ENCODE measurements at regions of chr12 and their contacts with region 1.

Region 1: DNA sequence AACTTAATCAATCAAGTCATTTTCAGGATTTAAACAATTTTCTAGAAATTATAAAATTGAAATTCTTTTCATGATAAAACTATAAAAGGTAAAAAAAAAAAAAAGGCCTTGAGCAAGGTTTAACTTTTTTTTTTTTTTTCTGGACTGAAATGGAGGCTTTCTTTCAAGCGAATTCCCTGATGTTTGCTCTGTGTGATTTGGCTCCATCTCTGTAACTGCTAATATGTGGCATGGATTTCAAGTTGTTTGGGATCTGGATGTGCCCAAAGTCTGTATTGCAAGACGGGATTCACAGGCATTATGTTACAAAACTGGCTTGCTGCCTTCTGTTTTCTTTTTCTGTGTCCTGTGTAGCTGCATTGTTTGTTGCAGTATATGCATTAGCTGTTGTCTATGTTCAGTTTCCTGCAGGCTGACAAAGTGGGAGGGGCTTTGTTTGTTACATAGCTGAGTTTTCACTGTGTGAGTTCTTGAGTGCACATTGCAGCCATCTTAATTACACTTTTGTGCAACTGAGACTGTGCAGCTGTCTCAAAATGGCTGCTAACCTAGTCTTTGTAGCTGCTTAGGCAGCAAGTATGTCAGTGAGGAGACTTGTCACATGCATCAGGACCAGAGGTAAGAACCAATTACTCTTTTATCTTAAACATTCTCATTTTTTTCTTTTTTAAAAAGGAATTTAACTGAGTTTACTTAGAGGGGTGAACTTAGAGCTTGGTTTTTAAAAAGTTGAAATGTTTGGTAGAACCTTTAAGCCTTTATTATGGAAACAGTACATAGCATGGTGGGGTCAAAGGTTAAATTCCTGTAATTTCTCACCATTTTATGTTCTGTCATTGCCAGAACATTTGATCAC is 19.5 kb downstream of the ATF7IP start:
- DNase-seq: peak in 8 of 9 donors; percentile 47 to 84 (median 77)
- ATAC-seq: peak; percentile 96
- H3K4me3 ChIP-seq: peak overlapping the region; percentile 18
- H3K4me3 Mint-ChIP-seq: peak overlapping the region; percentile 65 to 85 (median 76)
- H3K27ac ChIP-seq: peak overlapping the region; percentile 71
- H3K27ac Mint-ChIP-seq: peak overlapping the region; percentile 86 to 95 (median 93)
- H3K4me1 ChIP-seq: peaks cover 32 to 49% of the 10 kb centered on the region in 2 donors
- H3K4me1 Mint-ChIP-seq: peaks cover 31 to 79% (median 68%) of the 10 kb centered on the region in 7 donors
- H3K27me3 ChIP-seq: no peaks in the 10 kb centered on the region
- H3K27me3 Mint-ChIP-seq: no peaks in the 10 kb centered on the region

Region 2: GRCh38 chr12:12724661-12725545 is 1660.1 kb before region 1 on chr12:
- CTCF ChIA-PET with region 1: no interaction called
- POLR2A ChIA-PET with region 1: no interaction called
- intact Hi-C with region 1: loop called in 1 of 2 experiments (anchors 5 kb)
- DNase-seq: peak; percentile 78 to 97 (median 92)
- ATAC-seq: peak; percentile 77
- H3K4me3 ChIP-seq: peak overlapping the region; percentile 53
- H3K4me3 Mint-ChIP-seq: peak overlapping the region; percentile 87 to 98 (median 94)
- H3K27ac ChIP-seq: peak overlapping the region; percentile 99
- H3K27ac Mint-ChIP-seq: peak overlapping the region; percentile 96 to 99 (median 97)
- H3K4me1 ChIP-seq: peaks cover 28% of the 10 kb centered on the region in 2 donors
- H3K4me1 Mint-ChIP-seq: peaks cover 23 to 64% (median 56%) of the 10 kb centered on the region in 7 donors
- H3K27me3 ChIP-seq: no peaks in the 10 kb centered on the region
- H3K27me3 Mint-ChIP-seq: peaks cover 0 to 7% (median 0%) of the 10 kb centered on the region in 5 donors

Region 3: DNA sequence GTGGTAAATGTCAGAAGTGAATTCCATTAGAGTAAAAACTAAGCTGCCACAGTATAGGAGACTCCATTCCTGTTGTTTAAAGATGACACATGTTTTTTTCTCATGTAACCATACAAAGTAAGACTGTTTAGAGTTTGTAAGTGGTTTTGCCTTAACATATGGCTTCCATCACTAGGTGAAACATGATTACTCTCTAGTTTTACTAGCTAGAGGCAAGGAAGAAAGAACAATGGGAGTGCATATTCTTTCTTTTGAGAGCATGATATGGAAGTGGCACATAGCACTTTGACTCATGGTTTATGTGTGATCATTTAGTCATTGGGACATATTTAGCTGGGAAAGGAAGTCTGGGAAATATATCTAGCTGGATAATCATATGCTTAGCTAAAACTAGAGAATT is 11.8 kb before region 1 on chr12:
- CTCF ChIA-PET with region 1: interaction called, 12 read pairs
- POLR2A ChIA-PET with region 1: interaction called, 84 read pairs
- intact Hi-C with region 1: loop called (anchors 1 kb)
- DNase-seq: no peak
- ATAC-seq: peak; percentile 27
- H3K4me3 ChIP-seq: no peak overlapping the region
- H3K4me3 Mint-ChIP-seq: peak overlapping the region in 9 of 10 donors; percentile 10 to 81 (median 58)
- H3K27ac ChIP-seq: peak overlapping the region; percentile 31
- H3K27ac Mint-ChIP-seq: peak overlapping the region; percentile 21 to 88 (median 74)
- H3K4me1 ChIP-seq: peaks cover 35 to 41% of the 10 kb centered on the region in 2 donors
- H3K4me1 Mint-ChIP-seq: peaks cover 30 to 78% (median 71%) of the 10 kb centered on the region in 7 donors
- H3K27me3 ChIP-seq: no peaks in the 10 kb centered on the region
- H3K27me3 Mint-ChIP-seq: no peaks in the 10 kb centered on the region

Region 4: DNA sequence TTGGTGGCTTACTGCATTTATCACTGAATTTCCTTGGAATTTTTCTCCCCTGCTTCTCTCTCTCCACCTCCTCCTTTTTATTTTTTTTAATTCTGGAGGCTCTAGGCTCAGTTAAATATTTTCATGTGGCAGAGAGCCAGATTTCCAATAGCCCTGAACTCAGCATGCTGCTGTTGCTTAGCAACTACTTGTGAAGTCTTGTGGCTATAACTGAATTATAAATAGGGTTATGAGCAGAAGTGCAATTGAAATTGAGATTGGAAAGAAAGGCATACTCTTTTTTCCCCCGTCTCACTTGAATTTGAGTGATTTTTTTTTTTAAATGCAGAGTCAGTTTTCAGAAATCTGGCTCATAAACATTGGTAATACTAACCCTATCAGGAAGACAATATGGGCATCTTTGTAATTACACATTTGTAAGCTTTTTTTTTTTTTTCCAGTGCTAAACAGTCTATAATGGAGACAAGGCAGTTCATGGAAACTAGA is 18.7 kb after region 1 on chr12:
- CTCF ChIA-PET with region 1: interaction called, 4 read pairs
- POLR2A ChIA-PET with region 1: interaction called, 9 read pairs
- intact Hi-C with region 1: loop called (anchors 2 kb)
- DNase-seq: peak in 6 of 9 donors; percentile 32 to 69 (median 49)
- ATAC-seq: peak; percentile 81
- H3K4me3 ChIP-seq: peak overlapping the region; percentile 19
- H3K4me3 Mint-ChIP-seq: peak overlapping the region; percentile 7 to 68 (median 64)
- H3K27ac ChIP-seq: peak overlapping the region; percentile 39
- H3K27ac Mint-ChIP-seq: peak overlapping the region; percentile 60 to 92 (median 83)
- H3K4me1 ChIP-seq: peaks cover 55 to 60% of the 10 kb centered on the region in 2 donors
- H3K4me1 Mint-ChIP-seq: peaks cover 51 to 89% (median 77%) of the 10 kb centered on the region in 7 donors
- H3K27me3 ChIP-seq: no peaks in the 10 kb centered on the region
- H3K27me3 Mint-ChIP-seq: no peaks in the 10 kb centered on the region

Region 5: DNA sequence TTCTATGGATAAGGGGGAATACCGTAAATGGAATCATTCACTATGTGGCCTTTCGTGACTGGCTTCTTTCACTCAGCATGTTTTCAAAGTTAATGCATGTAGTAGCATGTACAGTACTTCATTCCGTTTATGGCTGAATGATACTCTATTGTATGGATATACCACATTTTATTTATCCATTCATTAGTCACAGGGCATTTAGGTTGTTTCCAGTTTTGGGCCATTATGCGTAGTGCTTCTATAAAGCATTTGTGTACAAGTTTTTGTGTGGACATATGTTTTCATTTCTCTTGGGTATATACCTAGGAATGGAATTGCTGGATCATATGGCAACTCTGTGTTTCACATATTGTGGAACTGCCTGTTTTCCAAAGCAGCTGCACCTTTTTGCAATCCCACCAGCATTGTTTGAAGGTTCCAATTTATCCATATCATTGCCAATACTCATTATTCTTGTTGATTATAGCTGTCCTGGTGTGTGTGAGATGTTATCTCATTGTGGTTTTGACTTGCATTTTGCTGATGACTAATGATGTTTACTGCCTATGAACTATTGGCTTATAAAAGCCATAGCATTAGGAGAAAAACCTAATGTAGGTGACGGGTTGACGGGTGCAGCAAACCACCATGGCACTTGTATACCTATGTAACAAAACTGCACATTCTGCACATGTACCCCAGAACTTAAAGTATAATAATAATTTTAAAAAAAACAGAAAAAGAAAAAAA is 26.0 kb after region 1 on chr12:
- CTCF ChIA-PET with region 1: interaction called, 8 read pairs
- POLR2A ChIA-PET with region 1: interaction called, 16 read pairs
- intact Hi-C with region 1: loop called in 1 of 2 experiments (anchors 1 kb)
- DNase-seq: peak in 1 of 9 donors; percentile 39
- ATAC-seq: peak; percentile 79
- H3K4me3 ChIP-seq: peak overlapping the region; percentile 19
- H3K4me3 Mint-ChIP-seq: peak overlapping the region in 6 of 10 donors; percentile 36 to 63 (median 45)
- H3K27ac ChIP-seq: no peak overlapping the region
- H3K27ac Mint-ChIP-seq: peak overlapping the region in 6 of 9 donors; percentile 6 to 89 (median 56)
- H3K4me1 ChIP-seq: peaks cover 53 to 75% of the 10 kb centered on the region in 2 donors
- H3K4me1 Mint-ChIP-seq: peaks cover 29 to 77% (median 72%) of the 10 kb centered on the region in 7 donors
- H3K27me3 ChIP-seq: no peaks in the 10 kb centered on the region
- H3K27me3 Mint-ChIP-seq: no peaks in the 10 kb centered on the region

Region 6: DNA sequence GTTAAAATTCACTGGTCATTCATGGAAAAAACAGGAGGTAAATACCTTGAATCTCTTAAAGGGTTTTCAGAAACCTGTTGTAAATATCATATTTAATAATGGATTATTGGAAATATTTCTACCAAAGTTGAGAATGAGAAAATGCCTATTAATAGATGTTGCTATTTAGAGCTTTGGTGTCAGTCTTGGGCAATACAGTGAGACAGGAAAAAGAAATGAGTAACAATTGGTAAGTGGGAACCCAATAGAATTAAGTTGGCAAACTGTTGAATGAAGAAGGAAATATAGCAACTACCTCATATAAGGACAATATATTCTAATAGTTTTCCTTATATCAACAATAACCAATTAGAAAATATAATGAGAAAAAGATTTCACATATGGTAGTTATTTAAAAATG is 58.5 kb after region 1 on chr12:
- CTCF ChIA-PET with region 1: no interaction called
- POLR2A ChIA-PET with region 1: no interaction called
- intact Hi-C with region 1: no loop called
- DNase-seq: no peak
- ATAC-seq: no peak
- H3K4me3 ChIP-seq: no peak overlapping the region
- H3K4me3 Mint-ChIP-seq: no peak overlapping the region
- H3K27ac ChIP-seq: no peak overlapping the region
- H3K27ac Mint-ChIP-seq: peak overlapping the region in 5 of 9 donors; percentile 11 to 85 (median 51)
- H3K4me1 ChIP-seq: no peaks in the 10 kb centered on the region
- H3K4me1 Mint-ChIP-seq: peaks cover 17 to 51% (median 42%) of the 10 kb centered on the region in 7 donors
- H3K27me3 ChIP-seq: no peaks in the 10 kb centered on the region
- H3K27me3 Mint-ChIP-seq: no peaks in the 10 kb centered on the region

Region 7: DNA sequence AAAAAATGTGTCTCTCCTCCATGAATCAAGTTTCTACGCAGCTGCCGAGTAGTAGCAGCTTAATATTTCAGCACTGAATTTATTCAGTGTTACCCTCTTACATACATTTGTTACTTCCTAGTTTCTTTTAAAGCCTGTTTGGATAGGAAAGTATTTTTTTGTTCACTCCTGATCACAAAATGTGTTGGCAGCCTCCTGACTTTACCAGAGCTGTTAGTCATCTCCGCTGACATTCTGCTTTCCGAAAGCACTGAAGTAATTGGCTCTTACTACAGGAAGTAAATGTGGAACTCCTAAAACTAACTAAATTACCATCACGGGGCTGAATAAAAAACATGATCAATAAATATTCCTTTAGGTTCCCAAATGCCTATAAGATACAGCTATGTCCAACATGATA is 1178.7 kb after region 1 on chr12:
- CTCF ChIA-PET with region 1: no interaction called
- POLR2A ChIA-PET with region 1: no interaction called
- intact Hi-C with region 1: loop called (anchors 10 kb)
- DNase-seq: peak in 6 of 9 donors; percentile 39 to 54 (median 50)
- ATAC-seq: peak; percentile 84
- H3K4me3 ChIP-seq: peak overlapping the region; percentile 38
- H3K4me3 Mint-ChIP-seq: peak overlapping the region; percentile 54 to 87 (median 82)
- H3K27ac ChIP-seq: peak overlapping the region; percentile 82
- H3K27ac Mint-ChIP-seq: peak overlapping the region; percentile 87 to 96 (median 94)
- H3K4me1 ChIP-seq: peaks cover 0 to 37% of the 10 kb centered on the region in 2 donors
- H3K4me1 Mint-ChIP-seq: peaks cover 36 to 89% (median 77%) of the 10 kb centered on the region in 7 donors
- H3K27me3 ChIP-seq: no peaks in the 10 kb centered on the region
- H3K27me3 Mint-ChIP-seq: peaks cover 0 to 5% (median 0%) of the 10 kb centered on the region in 5 donors

Measured in naive thymus-derived CD4-positive, alpha-beta T cell (primary cell).